HEK293T (cell line): ENCODE measurements at regions of chr11 and their contacts with region 1.

Region 1: DNA sequence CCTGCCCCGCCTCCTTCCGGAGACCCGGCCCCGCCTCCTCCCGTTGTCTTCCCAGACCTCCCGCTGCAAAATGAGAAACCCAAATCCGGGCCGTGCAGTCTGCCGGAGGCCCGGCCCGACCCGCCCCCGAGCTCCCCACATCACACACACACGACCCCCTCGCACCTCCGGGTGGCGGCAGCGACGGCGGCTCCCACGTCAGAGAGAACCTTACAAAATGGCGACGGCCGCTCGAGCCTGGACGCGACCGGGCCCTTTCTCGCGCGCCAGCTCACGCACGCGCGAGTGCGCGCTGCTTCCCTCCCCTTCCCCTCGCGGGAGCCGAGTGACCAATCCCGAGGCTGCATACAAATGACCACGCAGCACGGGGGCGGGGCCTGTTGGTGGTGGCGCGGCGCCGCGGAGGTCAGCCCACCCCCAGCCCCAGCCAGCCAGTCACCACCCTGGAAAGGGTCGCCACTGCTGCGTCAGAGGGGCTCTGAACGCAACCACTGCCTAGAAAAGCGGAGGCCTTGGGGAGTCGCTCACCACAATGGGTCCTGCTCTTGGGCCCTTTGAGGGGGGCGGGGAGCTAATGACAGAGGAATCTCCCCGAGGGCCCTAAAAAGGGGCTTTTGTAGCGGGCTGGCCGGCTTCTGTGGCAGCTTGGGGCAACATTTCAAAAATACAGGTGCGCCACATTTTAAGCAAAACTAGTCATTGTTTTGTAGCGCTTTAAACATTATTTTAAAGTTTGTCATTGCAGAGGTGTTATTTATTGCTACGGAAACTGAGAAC is at the start of gene RBM4B:
- DNase-seq: peak; percentile 94

Region 2: GRCh38 chr11:66579017-66579606 is 98.7 kb before region 1 on chr11:
- CTCF ChIA-PET with region 1: interaction called, 15 read pairs
- POLR2A ChIA-PET with region 1: interaction called, 16 read pairs
- DNase-seq: peak; percentile 87

Region 3: DNA sequence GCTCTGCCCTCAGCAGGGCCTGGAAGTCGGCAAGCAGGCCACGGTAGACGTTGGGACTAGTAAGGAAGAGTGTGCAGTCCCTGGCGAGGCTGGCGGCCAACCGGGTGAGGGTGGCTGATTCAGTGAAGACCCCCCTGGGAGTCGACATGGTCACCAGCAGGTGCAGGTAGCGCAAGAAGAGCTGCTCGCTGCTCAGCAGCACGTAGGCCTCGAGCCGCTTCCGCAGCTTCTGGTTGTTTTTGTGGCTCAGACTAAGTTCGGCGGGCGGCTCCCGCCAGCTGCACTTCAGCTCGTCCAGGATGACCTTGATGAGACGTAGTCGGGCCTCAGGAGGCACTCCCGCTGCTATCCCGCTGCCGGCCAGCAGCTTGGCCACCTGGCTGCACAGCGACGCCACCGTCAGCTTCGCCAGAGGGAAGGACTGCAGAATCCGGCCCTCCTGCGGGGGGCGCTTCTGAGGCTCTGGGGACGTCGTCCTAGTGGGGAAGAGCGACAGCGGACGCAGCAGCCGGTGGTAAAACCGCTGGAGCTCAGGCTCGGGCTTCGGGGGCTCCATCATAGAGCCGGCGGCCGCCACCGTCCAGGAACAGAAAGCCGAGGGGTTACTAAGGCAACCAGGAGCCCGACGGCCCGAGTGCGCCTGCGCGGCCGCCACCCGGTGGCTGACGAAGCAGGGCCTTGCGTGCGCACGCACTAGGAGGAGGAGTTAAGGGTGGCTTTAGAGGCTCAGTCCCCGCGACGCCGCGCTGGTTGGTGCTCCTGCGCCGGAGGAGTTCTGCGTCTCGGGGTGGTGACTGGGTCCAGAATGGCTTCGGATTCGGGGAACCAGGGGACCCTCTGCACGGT is 85.1 kb before region 1 on chr11 and contains the starts of genes CCDC87 and CCS:
- CTCF ChIA-PET with region 1: interaction called, 3 read pairs
- POLR2A ChIA-PET with region 1: interaction called, 19 read pairs
- DNase-seq: peak; percentile 100